Right ventricle myocardium inferior (tissue), 1 donor: ENCODE measurements at regions of chr11 and their contacts with region 1.

Region 1: GRCh38 chr11:16293204-16293681 is 63.1 kb downstream of the SOX6 start:
- DNase-seq: no peak
- ATAC-seq: peak; percentile 91

Region 2: GRCh38 chr11:16239141-16240105 is 53.8 kb before region 1 on chr11:
- intact Hi-C with region 1: loop called (anchors 5 kb)
- DNase-seq: no peak
- ATAC-seq: peak; percentile 72

Region 3: GRCh38 chr11:16365581-16366228 is 72.5 kb after region 1 on chr11:
- intact Hi-C with region 1: no loop called
- DNase-seq: no peak
- ATAC-seq: peak; percentile 28

Region 4: GRCh38 chr11:16591157-16591556 is 297.9 kb after region 1 on chr11:
- intact Hi-C with region 1: loop called (anchors 5 kb)
- DNase-seq: no peak
- ATAC-seq: no peak